ENCODE measurements at regions of chr2 and their contacts with region 1.

Region 1: DNA sequence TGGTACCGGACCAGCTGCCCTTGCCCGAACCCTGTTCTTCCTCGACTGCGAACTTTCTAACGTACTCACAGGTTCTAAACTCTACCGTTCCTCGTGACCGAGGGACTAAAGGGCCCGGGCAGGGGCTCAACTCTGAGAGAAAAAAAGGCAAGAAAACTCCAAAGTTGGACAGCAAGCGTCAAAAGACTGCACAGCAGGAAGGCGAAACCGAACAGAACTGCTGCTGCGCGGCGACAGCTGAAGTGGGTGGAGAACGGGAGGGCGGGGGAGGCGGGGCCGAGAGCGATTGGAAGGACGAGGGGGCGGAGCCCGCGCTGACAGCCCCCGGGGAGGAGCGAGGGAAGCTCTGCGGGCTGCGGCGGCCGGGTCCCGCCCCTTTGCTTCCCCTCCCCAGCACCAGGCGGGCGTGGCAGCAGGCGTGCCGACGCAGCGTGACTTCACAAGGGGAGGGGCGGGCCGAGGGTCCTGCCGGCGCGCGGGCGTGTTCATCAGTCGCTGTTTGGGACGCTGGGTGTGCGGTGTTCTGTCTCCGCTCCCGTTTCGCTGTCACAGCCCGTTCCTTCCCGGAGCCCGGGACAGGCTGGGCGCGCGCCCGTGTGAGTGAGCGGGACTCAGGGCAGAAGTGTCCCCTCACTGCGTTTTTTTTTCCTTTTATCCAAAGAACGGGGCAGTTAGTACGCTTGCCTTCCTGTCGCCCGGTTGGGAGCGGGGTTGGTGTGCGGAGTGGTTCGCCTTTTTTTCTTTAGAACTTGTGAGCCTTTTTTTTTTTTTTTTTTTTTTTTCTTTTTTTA is at the start of gene NABP1:
- DNase-seq: peak; percentile 99
- ATAC-seq: peak; percentile 84
- H3K4me3 Mint-ChIP-seq: peak within 1 kb of the TSS; percentile 97
- H3K27ac Mint-ChIP-seq: peak within 1 kb of the TSS; percentile 99
- H3K4me1 Mint-ChIP-seq: peaks cover 46% of the 10 kb centered on the region
- H3K27me3 Mint-ChIP-seq: no peaks in the 10 kb centered on the region
- total RNA-seq, gene NABP1: 52.4 to 54.1 TPM

Region 2: DNA sequence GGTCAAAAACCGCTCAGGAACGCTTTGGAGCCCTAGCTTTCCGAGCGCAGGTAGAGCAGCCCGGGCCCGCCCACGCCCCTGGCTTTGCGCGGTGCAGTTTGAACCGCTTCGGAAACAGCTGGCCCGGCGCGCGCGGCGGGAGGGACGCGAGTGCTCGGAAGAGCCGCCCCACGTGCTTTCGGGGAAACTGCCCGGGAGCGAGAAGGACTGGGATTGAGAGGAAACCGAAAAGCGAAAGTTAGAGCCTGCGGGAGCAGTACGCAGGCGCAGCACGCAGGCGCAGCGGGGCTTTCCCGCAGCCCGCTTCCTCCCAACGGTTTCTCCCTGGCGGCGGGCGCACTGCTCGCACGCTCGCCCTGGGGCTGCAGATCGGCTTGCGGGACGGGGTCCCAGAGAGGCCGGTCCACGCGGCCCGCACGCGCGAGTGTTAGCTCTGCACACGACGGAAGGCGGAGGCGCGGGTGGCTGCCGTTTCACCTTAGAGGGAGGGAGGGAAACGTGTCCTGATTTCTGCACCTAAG is 657.6 kb before region 1 on chr2:
- CTCF ChIA-PET with region 1: no interaction called
- POLR2A ChIA-PET with region 1: interaction called, 12 read pairs
- DNase-seq: peak; percentile 94
- ATAC-seq: peak; percentile 75
- H3K4me3 Mint-ChIP-seq: no peak overlapping the region
- H3K27ac Mint-ChIP-seq: no peak overlapping the region
- H3K4me1 Mint-ChIP-seq: peaks cover 38% of the 10 kb centered on the region
- H3K27me3 Mint-ChIP-seq: no peaks in the 10 kb centered on the region

Region 3: DNA sequence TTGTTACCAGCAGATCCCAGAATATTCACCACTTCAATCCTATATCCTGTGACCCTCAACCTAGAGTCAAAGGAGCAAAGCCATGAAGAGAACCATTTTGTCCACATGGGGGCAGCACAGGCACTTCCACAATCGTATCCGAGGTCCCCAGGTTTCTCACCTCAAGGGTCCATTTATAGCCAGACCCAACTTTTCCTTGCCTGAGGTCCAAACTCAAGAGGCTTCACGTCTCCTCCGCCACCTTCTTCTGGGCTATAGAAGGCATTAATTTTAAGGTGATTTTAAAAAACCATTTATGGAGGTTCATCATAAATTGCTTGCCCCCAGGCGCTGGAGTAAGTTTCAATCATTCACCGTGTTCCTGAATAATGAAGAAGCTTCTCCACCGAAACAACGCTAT is 111.5 kb before region 1 on chr2:
- CTCF ChIA-PET with region 1: interaction called, 33 read pairs
- POLR2A ChIA-PET with region 1: interaction called, 21 read pairs
- DNase-seq: peak; percentile 76
- ATAC-seq: peak; percentile 60
- H3K4me3 Mint-ChIP-seq: no peak overlapping the region
- H3K27ac Mint-ChIP-seq: no peak overlapping the region
- H3K4me1 Mint-ChIP-seq: peaks cover 57% of the 10 kb centered on the region
- H3K27me3 Mint-ChIP-seq: peaks cover 55% of the 10 kb centered on the region

Region 4: DNA sequence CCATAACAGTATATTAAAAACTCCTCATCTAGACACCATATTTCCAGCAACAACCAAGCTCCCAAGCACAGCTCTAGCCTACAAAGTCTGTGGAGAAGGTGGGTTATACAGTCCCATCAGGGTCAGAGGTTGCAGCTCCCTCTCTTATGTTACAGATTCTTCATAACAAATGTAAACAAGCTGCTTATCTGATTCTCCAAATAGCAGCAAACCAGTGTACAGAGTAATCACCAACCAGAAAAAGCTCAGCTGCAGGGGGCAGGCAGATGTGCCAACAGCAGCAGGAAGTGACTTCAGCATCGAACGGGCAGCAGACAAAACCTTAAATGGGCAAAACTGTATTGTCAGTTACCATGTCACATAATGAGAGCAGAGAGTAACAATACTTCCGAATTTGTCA is 52.8 kb before region 1 on chr2:
- CTCF ChIA-PET with region 1: interaction called, 28 read pairs
- POLR2A ChIA-PET with region 1: interaction called, 173 read pairs
- DNase-seq: peak; percentile 48
- ATAC-seq: peak; percentile 84
- H3K4me3 Mint-ChIP-seq: no peak overlapping the region
- H3K27ac Mint-ChIP-seq: peak overlapping the region; percentile 55
- H3K4me1 Mint-ChIP-seq: peaks cover 44% of the 10 kb centered on the region
- H3K27me3 Mint-ChIP-seq: no peaks in the 10 kb centered on the region

Region 5: GRCh38 chr2:191637182-191638078 is 40.4 kb before region 1 on chr2:
- CTCF ChIA-PET with region 1: interaction called, 37 read pairs
- POLR2A ChIA-PET with region 1: interaction called, 164 read pairs
- DNase-seq: peak; percentile 60
- ATAC-seq: peak; percentile 93
- H3K4me3 Mint-ChIP-seq: peak overlapping the region; percentile 69
- H3K27ac Mint-ChIP-seq: peak overlapping the region; percentile 93
- H3K4me1 Mint-ChIP-seq: peaks cover 60% of the 10 kb centered on the region
- H3K27me3 Mint-ChIP-seq: no peaks in the 10 kb centered on the region

Region 6: DNA sequence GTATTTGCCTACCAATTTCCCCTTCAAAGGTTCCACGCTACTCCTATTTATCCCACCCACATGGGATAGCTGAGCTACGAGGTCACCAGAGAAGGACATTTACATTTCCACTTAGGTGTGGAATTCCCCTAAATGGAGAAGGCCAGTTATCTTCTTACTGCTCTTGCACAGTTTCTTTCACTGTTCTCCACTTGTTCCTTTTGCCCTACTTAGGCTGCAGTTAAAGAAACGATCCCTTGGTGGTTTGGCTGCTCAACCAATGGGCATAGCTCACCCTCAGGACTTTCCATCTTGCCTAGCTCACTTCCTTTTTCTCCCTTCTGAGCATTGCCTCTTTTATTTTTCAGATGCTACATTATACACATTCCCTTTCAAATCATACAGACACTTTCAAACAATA is 11.1 kb before region 1 on chr2:
- CTCF ChIA-PET with region 1: interaction called, 6 read pairs
- POLR2A ChIA-PET with region 1: interaction called, 14 read pairs
- DNase-seq: no peak
- ATAC-seq: peak; percentile 42
- H3K4me3 Mint-ChIP-seq: no peak overlapping the region
- H3K27ac Mint-ChIP-seq: no peak overlapping the region
- H3K4me1 Mint-ChIP-seq: peaks cover 27% of the 10 kb centered on the region
- H3K27me3 Mint-ChIP-seq: no peaks in the 10 kb centered on the region

Region 7: GRCh38 chr2:191740016-191740419 is 62.2 kb after region 1 on chr2:
- CTCF ChIA-PET with region 1: no interaction called
- POLR2A ChIA-PET with region 1: interaction called, 10 read pairs
- DNase-seq: peak; percentile 89
- ATAC-seq: peak; percentile 97
- H3K4me3 Mint-ChIP-seq: peak overlapping the region; percentile 11
- H3K27ac Mint-ChIP-seq: peak overlapping the region; percentile 79
- H3K4me1 Mint-ChIP-seq: peaks cover 16% of the 10 kb centered on the region
- H3K27me3 Mint-ChIP-seq: peaks cover 31% of the 10 kb centered on the region

Region 8: DNA sequence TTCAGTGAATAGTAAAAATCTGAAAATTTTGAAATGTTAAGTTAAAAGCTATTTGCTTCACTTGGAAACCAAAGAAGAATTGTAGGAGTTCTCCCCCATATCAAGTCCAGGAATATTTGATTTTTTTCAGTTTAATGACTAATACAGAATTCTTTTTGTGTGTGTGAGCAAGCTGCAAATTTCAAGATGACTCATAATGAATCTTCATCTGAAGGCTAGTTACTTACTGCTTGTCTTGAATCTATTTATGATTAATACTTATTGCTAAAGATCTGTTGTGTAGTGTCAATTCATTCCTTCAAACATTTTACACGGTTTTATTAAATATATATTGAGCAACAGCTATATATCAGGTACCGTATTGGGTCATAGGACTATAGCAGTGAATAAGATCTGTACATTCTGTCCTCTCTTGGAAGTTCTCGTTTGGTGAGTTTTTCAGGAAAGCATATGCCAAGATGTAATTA is 216.9 kb after region 1 on chr2:
- CTCF ChIA-PET with region 1: no interaction called
- POLR2A ChIA-PET with region 1: no interaction called
- DNase-seq: no peak
- ATAC-seq: no peak
- H3K4me3 Mint-ChIP-seq: no peak overlapping the region
- H3K27ac Mint-ChIP-seq: no peak overlapping the region
- H3K4me1 Mint-ChIP-seq: no peaks in the 10 kb centered on the region
- H3K27me3 Mint-ChIP-seq: peaks cover 9% of the 10 kb centered on the region